AG04449 (cell line): ENCODE measurements at regions of chr11 and their contacts with region 1.

Region 1: GRCh38 chr11:78586452-78587046 is 11.9 kb upstream of the NARS2 start:
- DNase-seq: no peak
- H3K4me3 ChIP-seq: no peak overlapping the region
- CTCF ChIP-seq: peak; percentile 11

Region 2: GRCh38 chr11:78574386-78575381 is 11.9 kb before region 1 on chr11 and contains the start of gene NARS2:
- CTCF ChIA-PET with region 1: interaction called, 21 read pairs
- POLR2A ChIA-PET with region 1: no interaction called
- DNase-seq: peak; percentile 71
- H3K4me3 ChIP-seq: peak within 1 kb of the TSS; percentile 95
- CTCF ChIP-seq: no peak

Region 3: GRCh38 chr11:78784321-78785061 is 197.9 kb after region 1 on chr11:
- CTCF ChIA-PET with region 1: no interaction called
- POLR2A ChIA-PET with region 1: no interaction called
- DNase-seq: peak; percentile 37
- H3K4me3 ChIP-seq: no peak overlapping the region
- CTCF ChIP-seq: no peak